Prostate gland (tissue), 2 donors: ENCODE measurements at regions of chr10 and their contacts with region 1.

Region 1: GRCh38 chr10:13056456-13057077 is 43.4 kb upstream of the OPTN start:
- DNase-seq: no peak
- H3K4me3 ChIP-seq: no peak overlapping the region
- H3K27ac ChIP-seq: no peak overlapping the region
- H3K4me1 ChIP-seq: no peaks in the 10 kb centered on the region
- H3K27me3 ChIP-seq: no peaks in the 10 kb centered on the region
- CTCF ChIP-seq: peak in 3 of 4 experiments; percentile 17 to 26 (median 21)
- POLR2A ChIP-seq: no peak

Region 2: GRCh38 chr10:12717981-12718707 is 338.4 kb before region 1 on chr10:
- intact Hi-C with region 1: loop called (anchors 5 kb)
- DNase-seq: no peak
- H3K4me3 ChIP-seq: no peak overlapping the region
- H3K27ac ChIP-seq: no peak overlapping the region
- H3K4me1 ChIP-seq: peaks cover 7% of the 10 kb centered on the region
- H3K27me3 ChIP-seq: no peaks in the 10 kb centered on the region
- CTCF ChIP-seq: peak in 2 of 4 experiments; percentile 41 to 47
- POLR2A ChIP-seq: no peak

Region 3: GRCh38 chr10:12782537-12782936 is 274.0 kb before region 1 on chr10:
- intact Hi-C with region 1: loop called (anchors 10 kb)
- DNase-seq: peak; percentile 13
- H3K4me3 ChIP-seq: no peak overlapping the region
- H3K27ac ChIP-seq: no peak overlapping the region
- H3K4me1 ChIP-seq: peaks cover 2% of the 10 kb centered on the region
- H3K27me3 ChIP-seq: no peaks in the 10 kb centered on the region
- CTCF ChIP-seq: peak; percentile 45 to 72 (median 64)
- POLR2A ChIP-seq: no peak

Region 4: DNA sequence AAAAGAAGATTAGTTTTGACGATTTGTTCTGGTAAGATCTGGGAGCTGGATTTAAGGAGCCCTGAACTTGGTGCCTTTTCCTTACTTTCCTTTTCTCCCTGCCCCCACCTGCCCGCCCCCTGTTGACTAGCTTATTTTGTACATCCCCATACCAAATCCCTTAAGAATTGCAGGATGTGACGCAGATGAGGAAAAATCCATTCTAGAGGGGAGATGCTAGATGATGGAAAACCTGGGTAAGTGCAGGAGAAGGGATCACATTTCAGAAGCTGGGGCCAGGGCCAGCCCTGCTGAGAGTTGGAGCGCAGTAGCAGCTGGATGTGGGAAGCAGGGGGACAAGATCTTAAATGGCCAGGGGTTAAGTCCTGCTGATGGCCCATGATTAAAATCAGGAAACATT is 148.9 kb before region 1 on chr10:
- intact Hi-C with region 1: loop called (anchors 5 kb)
- DNase-seq: no peak
- H3K4me3 ChIP-seq: no peak overlapping the region
- H3K27ac ChIP-seq: no peak overlapping the region
- H3K4me1 ChIP-seq: peaks cover 4% of the 10 kb centered on the region
- H3K27me3 ChIP-seq: no peaks in the 10 kb centered on the region
- CTCF ChIP-seq: no peak
- POLR2A ChIP-seq: no peak